ENCODE measurements at regions of chr6 and their contacts with region 1.

Region 1: DNA sequence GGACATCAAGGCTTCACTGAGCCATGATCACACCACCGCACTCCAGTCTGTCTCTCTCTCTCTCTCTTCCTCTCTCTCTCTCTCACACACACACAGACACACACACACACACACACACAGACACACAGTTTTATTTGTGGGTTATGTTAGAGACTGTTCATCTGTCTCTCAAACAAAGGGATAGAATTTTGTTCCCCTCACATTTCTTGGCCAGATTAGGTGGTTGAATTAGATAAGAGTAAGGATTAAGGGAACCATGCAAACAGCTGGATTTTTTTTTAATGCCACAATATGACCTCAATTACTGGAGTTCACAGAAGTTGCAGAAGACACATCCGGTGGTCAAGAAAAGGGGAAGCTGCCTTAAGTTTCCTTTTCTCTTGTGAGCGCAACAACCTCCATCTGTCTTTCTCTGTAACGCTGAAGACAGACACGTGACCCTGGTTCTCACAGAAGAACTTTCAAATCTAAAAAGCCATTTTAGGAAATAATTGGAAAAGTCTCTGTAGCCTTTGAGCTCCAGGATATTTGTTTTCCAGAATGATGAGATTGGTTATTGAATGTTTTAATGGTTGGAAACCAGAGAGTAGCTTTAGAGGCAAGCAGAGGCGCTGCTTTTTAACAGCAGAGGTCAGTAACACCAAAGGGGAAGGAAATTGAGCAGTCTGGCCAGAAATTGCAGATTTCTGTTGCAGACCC is 33.0 kb upstream of the LGSN start:
- DNase-seq: peak; percentile 43 to 74 (median 52)
- H3K4me3 ChIP-seq: no peak overlapping the region
- H3K27ac ChIP-seq: peak overlapping the region in 3 of 5 donors; percentile 20 to 47 (median 47)
- H3K4me1 ChIP-seq: peaks cover 11 to 16% of the 10 kb centered on the region in 2 donors
- H3K27me3 ChIP-seq: no peaks in the 10 kb centered on the region
- CTCF ChIP-seq: peak; percentile 34 to 67 (median 65)
- POLR2A ChIP-seq: no peak

Region 2: DNA sequence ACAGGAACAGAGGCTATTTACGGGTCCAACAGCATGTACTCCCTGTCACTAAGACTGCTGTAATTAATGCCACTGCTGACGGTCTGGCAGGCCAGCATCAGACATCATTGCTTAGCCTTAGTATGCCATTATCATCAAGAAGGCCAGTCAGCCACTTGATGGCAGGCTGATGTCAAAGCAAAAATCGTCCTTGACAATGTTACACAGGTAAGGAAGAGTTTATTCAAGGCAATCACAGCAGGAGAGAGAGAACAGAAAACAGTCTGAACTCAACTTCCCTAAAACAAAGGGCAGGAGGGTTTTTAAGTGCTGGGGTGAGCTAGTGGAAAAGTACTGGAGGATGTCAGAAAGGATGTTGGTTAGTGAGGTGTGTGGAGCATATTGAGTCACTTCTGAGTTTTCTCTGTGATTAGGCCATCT is 116.3 kb before region 1 on chr6:
- intact Hi-C with region 1: no loop called
- DNase-seq: no peak
- H3K4me3 ChIP-seq: no peak overlapping the region
- H3K27ac ChIP-seq: no peak overlapping the region
- H3K4me1 ChIP-seq: no peaks in the 10 kb centered on the region
- H3K27me3 ChIP-seq: no peaks in the 10 kb centered on the region
- CTCF ChIP-seq: no peak
- POLR2A ChIP-seq: no peak

Region 3: DNA sequence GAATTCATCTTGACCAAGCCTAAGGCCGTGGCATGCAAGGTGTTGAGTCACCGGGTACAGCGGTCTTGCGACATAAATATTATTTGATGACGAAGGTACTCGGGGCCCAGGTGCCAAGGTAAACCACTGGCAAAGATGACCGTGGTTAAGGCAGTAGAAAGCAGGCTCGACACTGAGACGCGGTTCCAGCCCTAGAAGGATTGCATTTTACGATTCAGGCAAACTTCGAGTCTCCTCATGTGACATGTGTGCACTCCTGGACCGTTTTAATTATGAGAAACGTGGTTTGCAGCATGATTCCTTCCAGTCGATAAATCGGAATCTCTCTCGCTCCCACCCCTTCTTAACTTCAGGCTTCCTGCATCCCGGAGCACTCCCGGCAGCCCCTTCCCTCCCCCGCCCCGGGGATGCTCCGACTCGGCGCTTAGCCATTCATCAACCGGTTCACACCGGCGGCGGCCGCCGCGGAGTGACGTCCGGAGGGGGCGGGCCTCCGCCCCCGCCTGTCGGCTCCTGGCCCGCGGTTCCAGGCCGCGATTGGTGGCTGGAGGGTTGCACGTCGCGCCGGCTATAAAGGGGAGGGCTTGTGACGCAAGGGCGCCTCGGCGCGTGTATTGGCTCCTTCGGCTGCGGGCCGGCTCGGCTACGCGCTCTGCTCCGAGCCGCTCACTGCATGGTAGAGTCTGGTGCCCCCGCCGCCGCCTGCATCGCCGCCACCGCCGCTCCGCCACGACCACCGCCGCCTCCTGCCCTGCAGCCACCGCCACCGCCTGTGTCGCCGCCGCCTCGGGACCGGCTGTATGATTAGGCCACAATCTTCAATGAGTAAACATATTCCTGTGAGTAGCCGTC is 219.4 kb after region 1 on chr6 and contains the starts of genes LOC128125822 and PTP4A1:
- intact Hi-C with region 1: loop called in 1 of 2 experiments (anchors 10 kb)
- DNase-seq: peak; percentile 97 to 99 (median 98)
- H3K4me3 ChIP-seq: peak within 1 kb of the TSS; percentile 83 to 93 (median 86)
- H3K27ac ChIP-seq: peak within 1 kb of the TSS; percentile 99 to 100 (median 99)
- H3K4me1 ChIP-seq: peaks cover 8 to 41% of the 10 kb centered on the region in 2 donors
- H3K27me3 ChIP-seq: no peaks in the 10 kb centered on the region
- CTCF ChIP-seq: peak in 2 of 6 experiments; percentile 2 to 4
- POLR2A ChIP-seq: peak; percentile 99 to 100
- total RNA-seq, gene PTP4A1: 20.9 to 194 (median 69.6) TPM

Measured in adrenal gland (tissue), 19 donors.